AG04450 (cell line): ENCODE measurements at regions of chr7 and their contacts with region 1.

Region 1: GRCh38 chr7:143456992-143457793 is 13.9 kb downstream of the TAS2R60 start:
- DNase-seq: no peak
- H3K4me3 ChIP-seq: no peak overlapping the region
- H3K27ac ChIP-seq: peak overlapping the region; percentile 65
- H3K27me3 ChIP-seq: no peaks in the 10 kb centered on the region
- CTCF ChIP-seq: no peak

Region 2: DNA sequence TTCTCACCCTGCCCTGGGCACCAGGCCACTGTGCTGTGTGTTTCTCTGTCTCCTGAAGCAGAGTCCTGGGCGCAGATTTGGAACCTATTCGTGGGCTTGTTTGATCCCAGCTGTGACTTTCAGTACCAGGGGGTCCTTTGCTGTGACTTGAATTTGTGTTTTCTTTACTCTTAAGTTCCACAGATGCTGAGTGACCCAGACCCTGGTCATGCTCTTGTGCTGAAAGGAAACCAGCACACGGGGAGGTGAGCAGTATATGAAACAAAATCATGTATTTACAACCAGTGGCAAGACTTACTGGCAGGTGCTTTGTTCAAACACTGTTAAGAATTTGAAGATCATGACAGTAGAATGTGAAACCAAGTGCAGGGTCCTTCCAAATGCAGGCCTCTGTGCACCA is 1110.1 kb before region 1 on chr7:
- CTCF ChIA-PET with region 1: interaction called, 10 read pairs
- POLR2A ChIA-PET with region 1: no interaction called
- DNase-seq: no peak
- H3K4me3 ChIP-seq: no peak overlapping the region
- H3K27ac ChIP-seq: no peak overlapping the region
- H3K27me3 ChIP-seq: peaks cover 4% of the 10 kb centered on the region
- CTCF ChIP-seq: no peak

Region 3: GRCh38 chr7:143479055-143479766 is 22.0 kb after region 1 on chr7:
- CTCF ChIA-PET with region 1: no interaction called
- POLR2A ChIA-PET with region 1: no interaction called
- DNase-seq: no peak
- H3K4me3 ChIP-seq: no peak overlapping the region
- H3K27ac ChIP-seq: no peak overlapping the region
- H3K27me3 ChIP-seq: no peaks in the 10 kb centered on the region
- CTCF ChIP-seq: no peak